Activated naive CD4-positive, alpha-beta T cell treated with anti-CD3 and anti-CD28 coated beads for 36 hours (primary cell): ENCODE measurements at regions of chr7 and their contacts with region 1.

Region 1: GRCh38 chr7:50449881-50450589 is at the start of gene FIGNL1:
- DNase-seq: peak; percentile 86
- H3K4me3 Mint-ChIP-seq: peak within 1 kb of the TSS; percentile 94
- H3K27ac Mint-ChIP-seq: peak within 1 kb of the TSS; percentile 91
- H3K4me1 Mint-ChIP-seq: peaks cover 45% of the 10 kb centered on the region
- H3K27me3 Mint-ChIP-seq: no peaks in the 10 kb centered on the region
- total RNA-seq, gene FIGNL1: 43.7 to 44.4 TPM

Region 2: DNA sequence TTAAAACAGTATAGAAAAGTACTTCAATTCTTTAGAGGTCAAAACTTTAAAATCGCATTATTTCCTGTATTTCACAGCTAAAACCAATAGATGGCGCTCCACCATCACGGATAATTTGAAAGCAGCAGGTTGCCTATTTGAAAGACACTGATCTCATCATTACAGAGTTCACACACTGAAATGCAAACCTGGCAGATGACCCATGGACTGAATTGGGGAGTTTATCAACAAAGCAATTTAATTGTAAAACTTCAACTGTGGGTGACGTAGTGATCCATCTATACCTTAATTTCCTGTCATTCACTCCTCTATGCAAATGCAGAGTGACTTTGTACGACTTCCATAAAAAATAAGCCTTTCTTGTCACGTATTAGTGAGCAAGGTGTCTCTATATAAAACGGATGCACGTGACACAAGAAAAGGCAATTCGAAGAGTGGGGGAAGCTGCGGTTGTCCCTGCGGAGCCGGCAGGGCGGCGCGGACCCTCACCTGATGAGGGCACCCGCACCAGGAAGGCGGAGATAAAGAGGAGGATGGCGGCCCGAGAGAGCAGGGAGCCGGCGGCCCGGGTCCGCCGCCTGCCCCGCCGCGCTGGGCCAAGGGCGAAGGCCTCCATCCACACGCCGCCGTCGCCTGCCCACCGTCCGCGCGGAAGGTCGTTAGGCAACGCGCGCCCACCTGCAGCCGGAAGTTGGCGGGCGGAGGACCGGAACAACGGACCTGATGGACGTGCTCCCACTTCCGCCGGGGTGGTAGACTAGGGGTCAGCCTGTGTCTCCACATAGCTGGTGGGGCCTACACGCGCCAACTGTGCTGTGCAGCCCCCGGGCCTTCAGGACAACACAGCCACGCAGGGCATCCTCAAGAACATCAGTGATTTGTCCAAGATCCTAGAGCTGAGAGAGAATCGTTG is 357.2 kb before region 1 on chr7 and contains the start of gene ZPBP:
- CTCF ChIA-PET with region 1: interaction called, 3 read pairs
- intact Hi-C with region 1: loop called (anchors 1 kb)
- DNase-seq: peak; percentile 67
- H3K4me3 Mint-ChIP-seq: peak within 1 kb of the TSS; percentile 76
- H3K27ac Mint-ChIP-seq: peak within 1 kb of the TSS; percentile 81
- H3K4me1 Mint-ChIP-seq: peaks cover 7% of the 10 kb centered on the region
- H3K27me3 Mint-ChIP-seq: no peaks in the 10 kb centered on the region
- total RNA-seq, gene ZPBP: not detected

Region 3: GRCh38 chr7:50156706-50157105 is 293.3 kb before region 1 on chr7:
- CTCF ChIA-PET with region 1: interaction called, 3 read pairs
- intact Hi-C with region 1: loop called (anchors 1 kb)
- DNase-seq: no peak
- H3K4me3 Mint-ChIP-seq: peak overlapping the region; percentile 50
- H3K27ac Mint-ChIP-seq: peak overlapping the region; percentile 92
- H3K4me1 Mint-ChIP-seq: peaks cover 45% of the 10 kb centered on the region
- H3K27me3 Mint-ChIP-seq: no peaks in the 10 kb centered on the region

Region 4: DNA sequence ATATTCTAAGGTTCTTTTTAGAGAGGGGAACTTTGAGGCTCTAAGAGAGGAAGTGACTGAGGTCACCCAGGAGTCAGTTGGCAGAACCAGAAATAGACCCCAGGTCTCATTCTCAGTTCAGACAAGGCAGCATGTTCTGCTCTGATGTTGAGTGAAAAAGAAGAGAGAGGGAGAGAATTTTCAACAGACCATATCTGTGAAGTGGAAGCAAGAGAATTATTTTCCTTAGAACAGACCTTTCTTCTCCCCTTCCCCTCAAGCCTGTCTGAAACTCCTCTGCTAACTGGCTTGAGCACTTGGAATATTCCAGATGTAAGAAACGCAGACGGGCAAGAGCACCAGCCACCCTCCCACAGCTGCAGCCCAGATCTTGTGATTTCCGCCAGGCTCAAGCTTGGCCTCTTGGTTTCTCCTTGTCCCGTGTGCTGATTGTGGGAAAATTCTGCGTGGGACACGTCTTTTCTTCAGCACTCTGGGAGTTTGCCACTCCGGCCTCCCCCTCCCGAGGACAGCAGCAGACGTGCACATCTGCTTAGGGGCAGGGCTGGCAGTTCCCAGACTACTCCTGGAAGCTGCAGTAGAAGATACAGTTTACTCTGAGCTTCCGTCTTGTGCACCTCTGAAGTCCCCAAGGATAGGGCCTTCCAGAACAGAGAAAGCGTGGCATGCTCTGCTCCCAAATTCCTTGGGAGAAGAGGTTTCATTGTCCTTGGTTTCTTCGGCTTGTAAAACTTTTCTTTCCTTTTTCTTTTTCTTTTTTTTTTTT is 168.2 kb before region 1 on chr7:
- CTCF ChIA-PET with region 1: no interaction called
- intact Hi-C with region 1: no loop called
- DNase-seq: peak; percentile 29
- H3K4me3 Mint-ChIP-seq: peak overlapping the region; percentile 59
- H3K27ac Mint-ChIP-seq: peak overlapping the region; percentile 75
- H3K4me1 Mint-ChIP-seq: peaks cover 79% of the 10 kb centered on the region
- H3K27me3 Mint-ChIP-seq: no peaks in the 10 kb centered on the region

Region 5: GRCh38 chr7:50317221-50317678 is 132.8 kb before region 1 on chr7:
- CTCF ChIA-PET with region 1: no interaction called
- intact Hi-C with region 1: loop called (anchors 2 kb)
- DNase-seq: peak; percentile 77
- H3K4me3 Mint-ChIP-seq: peak overlapping the region; percentile 71
- H3K27ac Mint-ChIP-seq: peak overlapping the region; percentile 99
- H3K4me1 Mint-ChIP-seq: peaks cover 90% of the 10 kb centered on the region
- H3K27me3 Mint-ChIP-seq: no peaks in the 10 kb centered on the region

Region 6: DNA sequence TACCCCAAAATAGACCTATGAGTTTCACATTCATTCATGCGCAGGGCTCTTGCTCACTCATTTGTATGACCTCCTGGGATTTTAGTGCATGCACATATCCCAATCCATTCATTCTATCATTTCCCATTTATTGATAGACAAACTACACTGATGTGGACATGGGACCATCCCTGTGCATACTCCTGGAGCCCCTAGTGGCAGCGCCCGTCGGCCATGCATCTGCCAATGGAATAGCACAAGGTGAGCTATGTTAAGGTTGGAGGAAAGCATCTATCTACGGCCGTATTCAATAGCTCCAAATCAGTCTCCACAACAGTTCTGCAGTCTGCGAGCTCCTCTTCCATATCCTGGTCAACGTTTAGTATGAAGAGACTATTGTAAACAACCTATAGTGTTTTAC is 31.8 kb after region 1 on chr7:
- CTCF ChIA-PET with region 1: no interaction called
- intact Hi-C with region 1: no loop called
- DNase-seq: no peak
- H3K4me3 Mint-ChIP-seq: no peak overlapping the region
- H3K27ac Mint-ChIP-seq: no peak overlapping the region
- H3K4me1 Mint-ChIP-seq: no peaks in the 10 kb centered on the region
- H3K27me3 Mint-ChIP-seq: no peaks in the 10 kb centered on the region

Region 7: DNA sequence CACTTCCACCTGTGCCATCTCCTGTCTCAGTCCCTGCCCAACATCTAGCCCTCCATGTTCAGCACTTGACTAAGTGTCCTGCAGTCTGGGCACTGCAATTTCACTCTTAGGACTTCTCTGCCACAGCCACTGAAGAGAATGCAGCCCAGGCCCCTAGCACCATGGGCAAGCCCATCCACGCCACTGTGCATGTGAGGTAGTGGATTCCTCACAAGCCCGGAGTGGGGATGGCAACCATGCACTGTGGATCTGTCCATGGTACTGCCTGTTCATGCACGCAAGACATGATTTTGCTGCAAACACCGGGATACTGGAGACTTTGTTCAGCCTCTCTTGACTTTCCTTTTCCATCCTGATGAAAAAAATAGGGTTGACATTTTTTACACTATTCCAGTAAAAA is 102.9 kb after region 1 on chr7:
- CTCF ChIA-PET with region 1: no interaction called
- intact Hi-C with region 1: no loop called
- DNase-seq: peak; percentile 23
- H3K4me3 Mint-ChIP-seq: no peak overlapping the region
- H3K27ac Mint-ChIP-seq: no peak overlapping the region
- H3K4me1 Mint-ChIP-seq: no peaks in the 10 kb centered on the region
- H3K27me3 Mint-ChIP-seq: peaks cover 6% of the 10 kb centered on the region

Region 8: DNA sequence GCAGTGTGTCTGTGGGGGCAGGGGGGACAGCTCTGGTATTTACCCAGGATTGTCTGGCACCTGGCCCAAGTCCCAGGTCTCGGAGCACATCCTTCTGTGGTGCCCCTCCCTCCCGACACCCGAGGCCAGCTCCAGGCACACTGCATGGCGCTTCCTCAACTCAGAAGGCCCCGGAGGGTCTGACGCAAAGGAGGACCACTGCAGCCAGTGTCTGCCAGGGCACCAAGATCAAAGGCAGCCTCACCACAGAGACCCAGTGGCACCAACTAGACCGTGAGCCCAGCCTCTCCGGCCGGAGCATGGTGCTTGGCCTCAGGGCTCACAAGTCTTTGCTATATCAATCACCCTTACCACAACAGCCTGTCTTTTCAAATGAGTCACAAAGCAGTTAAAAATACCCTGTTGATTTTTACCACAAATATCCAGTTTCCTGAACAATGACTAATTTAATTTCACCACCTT is 214.5 kb after region 1 on chr7:
- CTCF ChIA-PET with region 1: no interaction called
- intact Hi-C with region 1: loop called (anchors 1 kb)
- DNase-seq: peak; percentile 47
- H3K4me3 Mint-ChIP-seq: no peak overlapping the region
- H3K27ac Mint-ChIP-seq: no peak overlapping the region
- H3K4me1 Mint-ChIP-seq: peaks cover 62% of the 10 kb centered on the region
- H3K27me3 Mint-ChIP-seq: no peaks in the 10 kb centered on the region

Region 9: GRCh38 chr7:50832744-50833143 is 382.7 kb after region 1 on chr7:
- CTCF ChIA-PET with region 1: no interaction called
- intact Hi-C with region 1: loop called (anchors 2 kb)
- DNase-seq: peak; percentile 47
- H3K4me3 Mint-ChIP-seq: no peak overlapping the region
- H3K27ac Mint-ChIP-seq: peak overlapping the region; percentile 13
- H3K4me1 Mint-ChIP-seq: peaks cover 11% of the 10 kb centered on the region
- H3K27me3 Mint-ChIP-seq: peaks cover 10% of the 10 kb centered on the region

Region 10: GRCh38 chr7:51113962-51114361 is 663.9 kb after region 1 on chr7:
- CTCF ChIA-PET with region 1: no interaction called
- intact Hi-C with region 1: no loop called
- DNase-seq: no peak
- H3K4me3 Mint-ChIP-seq: no peak overlapping the region
- H3K27ac Mint-ChIP-seq: no peak overlapping the region
- H3K4me1 Mint-ChIP-seq: no peaks in the 10 kb centered on the region
- H3K27me3 Mint-ChIP-seq: no peaks in the 10 kb centered on the region